H1 (cell line): ENCODE measurements at regions of chr2 and their contacts with region 1.

Region 1: GRCh38 chr2:235055891-235056516 is 104.2 kb downstream of the SH3BP4 start:
- DNase-seq: no peak
- H3K4me3 ChIP-seq: no peak overlapping the region
- H3K27ac ChIP-seq: no peak overlapping the region
- H3K4me1 ChIP-seq: no peaks in the 10 kb centered on the region
- H3K27me3 ChIP-seq: no peaks in the 10 kb centered on the region; a peak in 1 of 7 replicates
- CTCF ChIP-seq: peak; percentile 59 to 91 (median 71)
- EP300 ChIP-seq: no peak
- POLR2A ChIP-seq: peak in 1 of 2 experiments; percentile 52; a peak in 1 of 3 replicates
- RAD21 ChIP-seq: peak; percentile 84

Region 2: DNA sequence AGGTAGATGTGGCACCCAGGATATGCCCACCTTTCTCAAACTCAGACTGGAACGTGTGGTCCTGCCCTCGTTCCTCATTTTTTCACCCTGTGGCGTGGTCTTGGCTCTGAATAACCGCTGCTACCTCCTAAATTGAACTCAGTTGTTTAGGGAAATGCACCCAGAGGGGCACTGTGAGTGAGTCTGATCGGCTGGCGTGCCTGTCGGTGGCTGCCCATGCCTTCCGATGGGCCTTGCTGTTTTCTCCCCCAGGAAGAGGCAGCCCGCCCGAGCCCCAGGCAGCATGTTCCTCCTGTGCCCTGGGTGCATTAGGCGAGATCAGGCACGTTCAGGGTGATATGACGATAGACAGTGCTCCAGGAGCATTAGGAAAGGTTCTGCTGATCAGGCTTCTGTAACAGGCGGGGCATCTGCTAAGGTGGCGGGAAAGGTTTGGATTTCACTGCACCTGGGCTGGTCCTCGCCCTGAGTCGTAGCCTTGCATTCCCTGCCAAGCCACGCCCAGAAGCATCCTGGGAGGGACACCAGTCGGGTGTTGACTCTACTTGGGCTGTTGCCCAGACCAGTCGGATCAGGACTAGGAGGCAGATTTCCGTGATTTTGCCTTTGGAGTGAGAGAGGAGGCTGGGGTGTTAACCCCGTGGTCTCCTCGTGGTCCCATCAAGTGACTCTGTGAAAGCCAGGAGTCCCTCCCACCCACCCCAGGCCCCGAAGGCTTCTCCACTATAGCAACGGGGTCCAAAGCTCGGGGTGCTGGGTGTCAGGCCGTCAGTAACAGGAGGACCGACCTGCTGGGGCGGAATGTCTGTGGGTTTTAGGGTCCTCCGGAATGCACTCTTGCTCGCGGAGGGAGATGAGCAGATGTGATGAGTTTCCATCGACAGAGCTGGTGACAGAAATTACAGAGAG is 29.1 kb before region 1 on chr2:
- CTCF ChIA-PET with region 1: interaction called, 14 read pairs
- POLR2A ChIA-PET with region 1: no interaction called
- DNase-seq: no peak
- H3K4me3 ChIP-seq: no peak overlapping the region
- H3K27ac ChIP-seq: no peak overlapping the region
- H3K4me1 ChIP-seq: peaks cover 0 to 8% (median 7%) of the 10 kb centered on the region in 4 experiments; a peak in 4 of 7 replicates
- H3K27me3 ChIP-seq: no peaks in the 10 kb centered on the region
- CTCF ChIP-seq: no peak
- EP300 ChIP-seq: no peak
- POLR2A ChIP-seq: no peak
- RAD21 ChIP-seq: no peak

Region 3: GRCh38 chr2:235066895-235067294 is 10.9 kb after region 1 on chr2:
- CTCF ChIA-PET with region 1: interaction called, 26 read pairs
- POLR2A ChIA-PET with region 1: no interaction called
- DNase-seq: no peak
- H3K4me3 ChIP-seq: no peak overlapping the region
- H3K27ac ChIP-seq: no peak overlapping the region
- H3K4me1 ChIP-seq: peaks cover 2 to 15% (median 10%) of the 10 kb centered on the region in 4 experiments
- H3K27me3 ChIP-seq: no peaks in the 10 kb centered on the region
- CTCF ChIP-seq: no peak
- EP300 ChIP-seq: no peak
- POLR2A ChIP-seq: no peak
- RAD21 ChIP-seq: no peak

Region 4: DNA sequence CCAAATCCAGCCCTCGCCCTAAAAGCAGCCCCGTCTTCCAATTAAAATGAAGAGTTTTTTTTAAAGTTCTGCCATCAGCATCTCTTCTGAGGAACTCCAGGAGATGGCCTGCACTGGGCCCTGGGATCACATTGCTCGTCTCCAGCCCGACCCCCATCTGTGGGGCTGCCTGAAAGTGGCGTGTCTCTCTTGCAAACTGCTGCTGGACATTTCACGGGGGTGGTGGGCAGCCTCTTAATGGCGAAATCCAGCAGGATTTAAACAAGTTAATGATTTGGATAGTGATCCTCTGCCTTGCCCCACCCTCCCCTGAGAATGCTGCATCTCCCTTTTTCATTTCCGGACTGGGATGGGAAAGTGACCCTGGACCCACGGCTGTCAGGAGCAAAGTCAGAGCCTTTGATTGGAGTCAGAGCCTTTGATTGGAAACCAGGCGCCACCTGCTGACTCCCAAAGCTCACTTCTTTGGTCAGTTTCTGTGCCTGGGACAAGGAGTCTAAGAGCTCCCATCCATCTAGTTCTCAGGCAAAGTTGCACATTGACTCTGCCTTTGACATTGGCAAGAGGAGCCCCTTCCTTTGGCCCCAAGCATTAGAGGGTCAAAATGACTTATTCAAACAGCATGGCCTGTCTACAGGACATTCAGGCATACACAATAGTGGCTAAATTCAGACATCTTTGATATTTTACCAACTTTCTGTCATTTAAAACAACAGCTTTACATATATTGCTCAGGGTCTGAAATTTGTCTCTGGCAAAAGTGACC is 51.1 kb after region 1 on chr2:
- CTCF ChIA-PET with region 1: interaction called, 21 read pairs
- POLR2A ChIA-PET with region 1: no interaction called
- DNase-seq: peak; percentile 31 to 69
- H3K4me3 ChIP-seq: no peak overlapping the region
- H3K27ac ChIP-seq: no peak overlapping the region
- H3K4me1 ChIP-seq: peaks cover 0 to 3% (median 0%) of the 10 kb centered on the region in 4 experiments; a peak in 1 of 7 replicates
- H3K27me3 ChIP-seq: no peaks in the 10 kb centered on the region
- CTCF ChIP-seq: peak; percentile 33 to 80 (median 80)
- EP300 ChIP-seq: no peak
- POLR2A ChIP-seq: no peak
- RAD21 ChIP-seq: peak; percentile 92 to 95

Region 5: DNA sequence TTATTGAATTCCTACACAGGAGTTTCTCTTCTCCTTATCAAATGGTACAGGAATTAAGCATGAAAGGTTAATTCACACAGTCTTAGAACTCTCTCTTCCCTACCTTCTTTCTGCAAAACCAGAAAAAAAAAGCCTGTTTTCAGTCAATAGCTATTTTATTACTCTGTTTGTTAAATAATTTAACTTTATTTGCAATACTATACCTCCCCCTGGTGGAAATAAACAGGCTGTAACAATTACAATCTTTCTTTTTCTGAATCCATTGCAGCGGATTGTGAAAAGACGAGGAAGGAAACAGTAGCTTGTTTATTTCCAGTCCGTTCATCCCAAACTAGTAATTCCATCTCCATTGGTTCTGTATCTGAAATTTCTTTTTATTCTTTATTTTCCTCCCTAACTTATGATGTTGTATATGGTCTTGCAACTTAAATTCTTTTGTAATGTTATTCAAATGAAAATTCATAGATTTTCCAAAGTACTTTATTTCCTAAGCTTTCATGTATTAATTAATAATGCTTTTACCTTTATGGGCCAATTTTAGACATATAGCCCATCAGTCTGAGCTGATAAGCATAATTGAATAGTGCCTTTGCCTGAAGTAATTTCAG is 61.0 kb after region 1 on chr2:
- CTCF ChIA-PET with region 1: interaction called, 10 read pairs
- POLR2A ChIA-PET with region 1: no interaction called
- DNase-seq: no peak
- H3K4me3 ChIP-seq: no peak overlapping the region
- H3K27ac ChIP-seq: no peak overlapping the region
- H3K4me1 ChIP-seq: no peaks in the 10 kb centered on the region; a peak in 1 of 7 replicates
- H3K27me3 ChIP-seq: no peaks in the 10 kb centered on the region; a peak in 3 of 7 replicates
- CTCF ChIP-seq: peak in 2 of 3 experiments; percentile 34 to 51; a peak in 2 of 4 replicates
- EP300 ChIP-seq: no peak
- POLR2A ChIP-seq: no peak
- RAD21 ChIP-seq: peak; percentile 71 to 75

Region 6: DNA sequence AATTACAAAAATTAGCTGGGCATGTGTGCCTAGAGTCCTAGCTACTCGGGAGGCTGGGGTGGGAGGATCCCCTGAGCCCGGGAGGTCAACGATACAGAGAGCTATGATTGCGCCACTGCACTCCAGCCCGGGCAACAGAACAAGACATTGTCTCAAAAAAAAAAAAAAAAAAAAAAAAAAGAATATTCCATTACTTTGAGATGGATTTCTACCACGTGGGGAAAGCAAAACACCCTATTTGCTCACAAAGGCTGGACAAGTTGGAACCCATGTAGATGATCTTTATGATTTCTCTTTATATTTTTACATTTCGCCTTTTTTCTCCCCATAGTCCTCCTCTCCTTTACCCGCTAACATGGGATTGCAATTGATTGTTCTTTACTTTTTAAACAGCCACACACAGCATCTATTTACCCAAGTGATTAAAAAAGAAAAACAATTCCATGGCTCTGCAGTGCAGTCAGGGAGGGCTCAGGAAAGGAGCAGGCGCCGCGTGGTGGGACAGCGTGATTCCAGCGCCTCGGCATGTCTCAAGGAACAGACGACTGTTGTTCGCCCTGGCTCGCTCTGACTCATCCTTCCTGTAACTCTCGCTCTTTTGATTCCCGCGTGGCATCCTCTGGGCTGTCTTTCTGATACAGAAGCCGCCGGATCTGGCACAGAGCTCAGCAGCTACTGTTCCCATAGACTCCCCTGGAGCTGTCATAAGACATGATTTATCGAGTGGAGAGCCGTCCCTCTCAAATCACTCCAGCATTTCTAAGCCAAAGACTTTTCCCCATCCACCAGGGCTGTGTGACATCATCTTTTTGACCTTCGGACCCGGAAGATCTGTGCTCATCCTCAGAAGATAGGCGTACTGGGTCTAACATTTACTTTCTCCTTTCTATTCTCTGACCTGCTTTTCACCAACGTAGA is 207.5 kb after region 1 on chr2:
- CTCF ChIA-PET with region 1: no interaction called
- POLR2A ChIA-PET with region 1: no interaction called
- DNase-seq: peak in 1 of 2 experiments; percentile 10
- H3K4me3 ChIP-seq: no peak overlapping the region
- H3K27ac ChIP-seq: no peak overlapping the region
- H3K4me1 ChIP-seq: peaks cover 0 to 4% (median 1%) of the 10 kb centered on the region in 4 experiments; a peak in 2 of 7 replicates
- H3K27me3 ChIP-seq: no peaks in the 10 kb centered on the region
- CTCF ChIP-seq: no peak
- EP300 ChIP-seq: no peak
- POLR2A ChIP-seq: no peak
- RAD21 ChIP-seq: no peak